SK-N-SH (cell line): ENCODE measurements at regions of chr15 and their contacts with region 1.

Region 1: DNA sequence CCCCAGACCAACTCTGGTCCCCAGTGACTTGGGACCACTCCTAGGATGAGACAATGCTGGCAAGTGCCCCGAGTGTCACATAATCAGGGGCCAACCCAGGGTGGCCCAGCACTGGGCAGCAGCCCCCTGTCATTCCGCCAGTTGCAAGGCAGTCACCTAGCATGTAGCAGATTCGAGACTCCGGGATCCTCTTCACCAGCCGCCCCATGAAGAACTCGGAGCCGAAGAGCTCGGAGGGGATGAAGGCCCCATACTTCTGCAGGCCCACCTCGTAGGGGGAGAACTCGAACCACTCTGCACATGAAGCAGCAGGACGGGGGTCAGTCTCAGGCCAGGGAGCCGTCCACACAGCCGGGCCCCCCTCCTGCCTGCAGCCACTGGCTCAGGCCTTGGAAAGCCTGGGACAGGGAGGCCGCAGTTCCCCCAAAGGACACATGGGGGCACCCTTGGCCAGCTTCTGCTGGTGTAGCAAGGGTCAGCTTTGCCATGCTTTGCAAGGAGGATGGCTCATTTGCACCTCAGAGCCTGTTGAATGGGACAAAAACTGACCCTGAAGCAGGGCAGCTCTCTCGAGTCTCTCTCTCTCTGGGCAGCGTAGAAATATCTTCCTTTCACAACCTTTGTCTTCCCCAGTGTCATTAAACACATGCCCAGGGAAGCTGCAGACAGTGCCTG is 17.0 kb upstream of the EHD4 start:
- DNase-seq: peak; percentile 92
- H3K4me3 ChIP-seq: peak overlapping the region in 1 of 2 experiments; percentile 26; a peak in 1 of 4 replicates
- H3K27ac ChIP-seq: no peak overlapping the region
- H3K4me1 ChIP-seq: no peaks in the 10 kb centered on the region; a peak in 1 of 4 replicates
- H3K27me3 ChIP-seq: no peaks in the 10 kb centered on the region
- CTCF ChIP-seq: peak; percentile 92
- EP300 ChIP-seq: no peak
- RAD21 ChIP-seq: peak; percentile 98

Region 2: GRCh38 chr15:41972253-41973242 is 16.8 kb before region 1 on chr15 and contains the start of gene EHD4:
- CTCF ChIA-PET with region 1: interaction called, 50 read pairs
- POLR2A ChIA-PET with region 1: no interaction called
- DNase-seq: peak; percentile 97
- H3K4me3 ChIP-seq: peak within 1 kb of the TSS; percentile 86 to 100
- H3K27ac ChIP-seq: peak within 1 kb of the TSS; percentile 57 to 74
- H3K4me1 ChIP-seq: peaks cover 3 to 34% of the 10 kb centered on the region in 2 experiments; a peak in 3 of 4 replicates
- H3K27me3 ChIP-seq: no peaks in the 10 kb centered on the region
- CTCF ChIP-seq: peak; percentile 59
- EP300 ChIP-seq: no peak; a peak in 1 of 4 replicates
- RAD21 ChIP-seq: 0 out of 2 replicates have a peak, but pooled peaks have one; percentile 13
- polyA plus RNA-seq, gene EHD4: 16.9 and 17.5 TPM in 2 replicates

Region 3: GRCh38 chr15:41999290-42000285 is 10.2 kb after region 1 on chr15:
- CTCF ChIA-PET with region 1: interaction called, 21 read pairs
- POLR2A ChIA-PET with region 1: no interaction called
- DNase-seq: no peak
- H3K4me3 ChIP-seq: no peak overlapping the region
- H3K27ac ChIP-seq: no peak overlapping the region
- H3K4me1 ChIP-seq: no peaks in the 10 kb centered on the region; a peak in 1 of 4 replicates
- H3K27me3 ChIP-seq: peaks cover 10% of the 10 kb centered on the region
- CTCF ChIP-seq: no peak
- EP300 ChIP-seq: no peak
- RAD21 ChIP-seq: no peak

Region 4: GRCh38 chr15:42010434-42010833 is 21.0 kb after region 1 on chr15:
- CTCF ChIA-PET with region 1: interaction called, 21 read pairs
- POLR2A ChIA-PET with region 1: no interaction called
- DNase-seq: no peak
- H3K4me3 ChIP-seq: no peak overlapping the region
- H3K27ac ChIP-seq: no peak overlapping the region
- H3K4me1 ChIP-seq: no peaks in the 10 kb centered on the region
- H3K27me3 ChIP-seq: 0 out of 2 replicates have a peak, but pooled peaks cover 9% of the 10 kb centered on the region
- CTCF ChIP-seq: no peak
- EP300 ChIP-seq: no peak
- RAD21 ChIP-seq: no peak

Region 5: DNA sequence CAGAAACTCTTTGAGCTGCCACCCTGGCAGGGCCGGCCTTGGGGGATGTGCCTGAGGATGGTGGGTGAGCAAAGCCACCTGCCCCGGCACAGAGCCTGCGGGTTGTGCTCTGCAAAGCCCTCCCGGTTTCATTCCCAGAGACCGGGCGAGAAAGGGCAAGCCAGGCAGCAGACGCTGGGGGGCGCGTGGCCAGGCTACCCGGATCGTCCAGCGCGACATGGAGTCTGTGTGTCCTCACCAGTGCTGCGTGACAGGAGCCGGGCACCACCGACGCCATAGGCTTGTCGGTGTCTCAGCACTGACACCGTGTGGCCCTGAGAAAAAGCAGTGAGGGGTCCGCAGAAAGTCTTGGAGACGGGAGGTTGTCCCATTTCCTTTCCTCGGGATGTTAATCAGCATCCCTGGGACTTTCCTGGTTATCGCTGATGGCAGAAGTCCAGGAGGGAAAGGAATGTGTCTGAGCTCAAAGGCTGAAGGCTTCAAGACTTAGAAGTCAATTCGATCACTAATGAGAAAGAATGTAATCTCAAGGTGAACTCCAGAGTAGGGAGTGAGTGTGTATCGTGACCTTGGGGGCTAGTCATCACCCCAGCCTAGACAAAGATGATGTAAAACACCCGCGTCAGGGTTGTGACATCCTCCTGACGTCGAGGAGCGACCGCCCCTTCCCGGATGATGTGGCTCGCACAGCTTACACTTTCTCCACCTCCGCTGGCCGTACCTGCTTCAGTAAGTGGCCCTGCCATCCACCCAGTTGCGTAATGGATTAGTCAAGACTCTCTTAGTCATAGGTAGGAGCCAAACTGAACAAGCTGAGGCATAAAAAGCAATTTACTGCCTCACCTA is 67.8 kb after region 1 on chr15:
- CTCF ChIA-PET with region 1: interaction called, 165 read pairs
- POLR2A ChIA-PET with region 1: no interaction called
- DNase-seq: peak; percentile 90
- H3K4me3 ChIP-seq: peak overlapping the region; percentile 30 to 47
- H3K27ac ChIP-seq: no peak overlapping the region
- H3K4me1 ChIP-seq: peaks cover 0 to 8% of the 10 kb centered on the region in 2 experiments; a peak in 2 of 4 replicates
- H3K27me3 ChIP-seq: peaks cover 11% of the 10 kb centered on the region; the same call in 1 of the 2 replicates
- CTCF ChIP-seq: peak; percentile 63
- EP300 ChIP-seq: no peak
- RAD21 ChIP-seq: peak; percentile 72

Region 6: GRCh38 chr15:42065033-42065432 is 75.6 kb after region 1 on chr15:
- CTCF ChIA-PET with region 1: interaction called, 57 read pairs
- POLR2A ChIA-PET with region 1: no interaction called
- DNase-seq: peak; percentile 56
- H3K4me3 ChIP-seq: no peak overlapping the region
- H3K27ac ChIP-seq: peak overlapping the region in 1 of 2 experiments; percentile 58; a peak in 2 of 4 replicates
- H3K4me1 ChIP-seq: peaks cover 0 to 18% of the 10 kb centered on the region in 2 experiments; a peak in 1 of 4 replicates
- H3K27me3 ChIP-seq: no peaks in the 10 kb centered on the region
- CTCF ChIP-seq: no peak
- EP300 ChIP-seq: no peak
- RAD21 ChIP-seq: no peak

Region 7: DNA sequence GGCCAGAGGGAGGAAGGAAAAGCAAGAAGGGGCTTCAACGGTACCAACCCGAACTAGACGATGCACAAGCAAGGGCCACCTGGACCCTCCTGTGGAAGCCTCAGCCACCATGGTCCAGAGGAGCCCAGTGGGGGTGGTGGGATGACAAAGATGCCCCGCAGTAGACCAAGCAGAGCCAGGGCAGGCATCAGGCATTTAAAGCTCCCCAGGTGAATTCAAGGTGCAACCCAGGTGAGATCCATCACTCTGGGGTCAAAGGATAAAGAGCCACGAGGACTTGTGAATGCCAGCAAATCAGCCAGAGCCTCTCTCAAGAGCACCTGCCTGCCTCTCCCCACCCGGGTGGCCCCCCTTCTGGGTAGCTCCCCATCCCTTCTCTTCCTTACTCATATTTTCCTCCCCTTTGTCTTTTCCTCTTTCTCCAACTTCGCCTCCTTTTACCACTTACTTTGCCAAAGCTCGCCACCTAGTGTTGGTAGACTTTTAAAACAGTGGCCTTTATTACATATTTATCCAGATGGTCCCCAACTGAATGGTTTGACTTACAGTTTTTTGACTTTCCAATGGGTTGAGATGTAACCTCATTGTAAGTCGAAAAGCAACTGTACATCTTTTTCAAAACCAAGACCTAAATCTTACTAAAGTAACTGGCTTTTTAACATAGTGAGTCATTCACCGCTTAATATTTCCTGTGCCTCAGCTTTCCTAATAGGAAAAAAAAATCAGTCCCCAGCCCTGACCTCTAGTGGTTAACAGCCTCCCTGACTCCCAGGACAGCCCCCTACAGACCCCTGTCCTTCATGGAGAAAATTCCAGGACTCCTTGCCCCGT is 148.2 kb after region 1 on chr15:
- CTCF ChIA-PET with region 1: interaction called, 41 read pairs
- POLR2A ChIA-PET with region 1: no interaction called
- DNase-seq: peak; percentile 64
- H3K4me3 ChIP-seq: peak overlapping the region in 1 of 2 experiments; percentile 27; a peak in 1 of 4 replicates
- H3K27ac ChIP-seq: no peak overlapping the region
- H3K4me1 ChIP-seq: no peaks in the 10 kb centered on the region
- H3K27me3 ChIP-seq: no peaks in the 10 kb centered on the region; the same call in 1 of the 2 replicates
- CTCF ChIP-seq: peak; percentile 76
- EP300 ChIP-seq: no peak
- RAD21 ChIP-seq: peak; percentile 78

Region 8: DNA sequence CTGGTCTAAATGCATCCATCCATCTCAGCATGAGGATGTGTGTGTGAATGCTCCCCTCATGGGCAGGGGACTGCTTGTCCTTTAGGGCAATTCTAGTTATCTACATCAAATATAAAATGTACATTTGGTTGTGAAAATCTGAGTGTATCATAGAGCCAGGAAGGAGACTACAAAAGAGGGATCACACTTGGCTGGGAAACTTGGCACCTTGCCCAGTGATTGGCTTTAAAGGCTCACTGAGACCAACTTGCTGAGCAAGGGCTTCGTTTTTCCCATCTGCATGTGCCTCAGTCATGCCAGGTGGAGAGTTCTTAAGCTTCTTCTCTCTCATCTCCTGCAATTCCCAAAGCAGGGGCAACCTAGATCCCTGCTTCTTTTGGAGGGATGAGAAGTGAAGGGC is 375.1 kb after region 1 on chr15:
- CTCF ChIA-PET with region 1: no interaction called
- POLR2A ChIA-PET with region 1: no interaction called
- DNase-seq: no peak
- H3K4me3 ChIP-seq: no peak overlapping the region
- H3K27ac ChIP-seq: no peak overlapping the region
- H3K4me1 ChIP-seq: no peaks in the 10 kb centered on the region
- H3K27me3 ChIP-seq: no peaks in the 10 kb centered on the region
- CTCF ChIP-seq: no peak
- EP300 ChIP-seq: no peak
- RAD21 ChIP-seq: no peak